ENCODE measurements at regions of chr2 and their contacts with region 1.

Region 1: GRCh38 chr2:79876430-79876829 is 363.6 kb downstream of the CTNNA2 start:
- DNase-seq: peak; percentile 66
- H3K4me3 ChIP-seq: no peak overlapping the region
- H3K27ac ChIP-seq: no peak overlapping the region
- H3K4me1 ChIP-seq: no peaks in the 10 kb centered on the region
- H3K27me3 ChIP-seq: no peaks in the 10 kb centered on the region
- CTCF ChIP-seq: peak; percentile 47
- EP300 ChIP-seq: no peak
- RAD21 ChIP-seq: peak; percentile 62

Region 2: DNA sequence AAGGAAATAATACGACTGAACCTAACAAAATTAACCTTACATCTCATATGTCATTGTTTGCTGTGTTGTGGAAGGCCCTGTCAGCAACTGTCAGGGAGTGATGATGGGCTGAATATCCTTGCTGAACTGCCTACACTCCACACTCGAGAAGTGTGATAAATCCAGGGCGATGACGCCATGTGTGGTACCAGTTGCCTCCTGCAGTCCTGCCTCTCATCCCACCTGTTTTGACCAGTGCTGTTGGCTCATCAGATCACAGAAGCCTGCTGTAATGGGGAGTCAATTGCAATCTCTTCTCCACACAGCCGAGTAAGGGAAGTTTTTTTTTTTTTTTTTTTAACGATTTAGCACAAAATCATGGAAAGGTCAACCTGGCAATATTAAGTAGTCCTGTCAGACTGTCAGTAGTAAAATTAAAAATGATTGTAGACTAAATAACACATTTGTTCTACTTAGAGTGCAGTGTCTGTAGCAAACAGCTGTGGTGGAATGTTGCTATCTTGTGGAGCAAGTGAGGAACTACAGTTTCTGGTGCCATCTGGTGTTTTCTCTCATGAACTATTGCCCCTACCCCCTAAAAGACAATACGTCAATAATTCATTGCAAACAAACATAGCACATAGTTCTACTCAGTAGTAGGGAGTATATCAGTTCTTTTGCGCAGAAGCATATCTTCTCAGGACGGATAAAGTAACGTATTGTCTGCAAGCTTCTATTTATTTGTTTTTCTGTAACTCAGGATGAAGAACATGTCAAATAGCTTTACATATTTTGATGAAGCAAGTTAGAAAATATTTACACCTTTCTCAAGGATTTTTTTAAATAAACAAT is 16.0 kb before region 1 on chr2:
- CTCF ChIA-PET with region 1: interaction called, 15 read pairs
- POLR2A ChIA-PET with region 1: no interaction called
- DNase-seq: peak; percentile 63
- H3K4me3 ChIP-seq: no peak overlapping the region
- H3K27ac ChIP-seq: no peak overlapping the region
- H3K4me1 ChIP-seq: peaks cover 0 to 2% of the 10 kb centered on the region in 2 experiments; a peak in 1 of 4 replicates
- H3K27me3 ChIP-seq: no peaks in the 10 kb centered on the region
- CTCF ChIP-seq: peak; percentile 59
- EP300 ChIP-seq: no peak
- RAD21 ChIP-seq: peak; percentile 90

Region 3: GRCh38 chr2:79910643-79911042 is 34.2 kb after region 1 on chr2:
- CTCF ChIA-PET with region 1: no interaction called
- POLR2A ChIA-PET with region 1: no interaction called
- DNase-seq: peak; percentile 24
- H3K4me3 ChIP-seq: no peak overlapping the region
- H3K27ac ChIP-seq: no peak overlapping the region
- H3K4me1 ChIP-seq: peaks cover 0 to 4% of the 10 kb centered on the region in 2 experiments; a peak in 2 of 4 replicates
- H3K27me3 ChIP-seq: no peaks in the 10 kb centered on the region
- CTCF ChIP-seq: no peak
- EP300 ChIP-seq: no peak
- RAD21 ChIP-seq: peak; percentile 3; the same call in 1 of the 2 replicates

Region 4: DNA sequence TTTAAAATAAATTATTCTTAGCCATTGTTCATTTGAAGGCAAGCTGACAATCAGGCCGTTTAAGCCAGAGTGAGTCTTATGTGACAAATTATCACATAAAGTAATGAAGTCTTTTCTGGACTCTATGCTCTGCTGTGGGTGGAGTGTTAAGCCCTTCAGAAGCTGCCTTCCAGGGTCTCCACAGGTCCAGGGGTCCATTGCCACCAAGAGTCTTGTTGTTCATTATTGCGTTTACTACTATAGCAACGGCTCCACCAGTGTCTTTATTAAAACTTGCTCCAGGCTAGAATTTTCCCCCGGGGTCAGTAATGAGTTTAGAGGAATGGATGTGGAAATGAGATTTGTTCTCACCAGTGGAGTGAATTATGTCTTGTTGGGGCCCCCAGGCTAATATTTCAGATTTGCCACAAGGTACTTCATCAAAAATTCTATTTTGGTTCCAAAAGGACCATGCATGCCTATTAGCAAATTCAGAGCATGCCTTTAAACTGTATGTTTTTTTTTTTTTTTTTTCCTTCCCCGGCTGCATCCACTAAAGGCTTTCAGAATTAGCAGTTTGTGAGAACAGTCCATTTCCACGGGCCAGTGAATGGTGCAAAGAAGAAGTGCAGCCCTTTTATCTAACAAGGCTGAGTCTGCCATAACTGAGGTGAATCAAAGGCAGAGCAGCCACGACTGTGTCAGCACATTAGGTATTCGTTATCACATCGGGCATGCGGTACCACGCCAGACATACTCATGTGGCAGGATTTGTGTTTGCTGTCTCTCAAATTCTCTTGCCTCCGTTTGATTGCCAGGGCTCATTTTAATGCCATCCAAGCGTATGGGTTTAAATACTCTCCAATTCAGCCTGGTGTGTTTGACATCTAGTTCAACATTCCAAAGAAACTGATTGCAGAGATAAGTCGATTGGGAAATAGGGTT is 454.4 kb after region 1 on chr2:
- CTCF ChIA-PET with region 1: no interaction called
- POLR2A ChIA-PET with region 1: no interaction called
- DNase-seq: no peak
- H3K4me3 ChIP-seq: no peak overlapping the region
- H3K27ac ChIP-seq: no peak overlapping the region
- H3K4me1 ChIP-seq: peaks cover 0 to 9% of the 10 kb centered on the region in 2 experiments; a peak in 2 of 4 replicates
- H3K27me3 ChIP-seq: no peaks in the 10 kb centered on the region
- CTCF ChIP-seq: no peak
- EP300 ChIP-seq: no peak
- RAD21 ChIP-seq: no peak

Measured in SK-N-SH (cell line).